ENCODE measurements at regions of chr20 and their contacts with region 1.

Region 1: DNA sequence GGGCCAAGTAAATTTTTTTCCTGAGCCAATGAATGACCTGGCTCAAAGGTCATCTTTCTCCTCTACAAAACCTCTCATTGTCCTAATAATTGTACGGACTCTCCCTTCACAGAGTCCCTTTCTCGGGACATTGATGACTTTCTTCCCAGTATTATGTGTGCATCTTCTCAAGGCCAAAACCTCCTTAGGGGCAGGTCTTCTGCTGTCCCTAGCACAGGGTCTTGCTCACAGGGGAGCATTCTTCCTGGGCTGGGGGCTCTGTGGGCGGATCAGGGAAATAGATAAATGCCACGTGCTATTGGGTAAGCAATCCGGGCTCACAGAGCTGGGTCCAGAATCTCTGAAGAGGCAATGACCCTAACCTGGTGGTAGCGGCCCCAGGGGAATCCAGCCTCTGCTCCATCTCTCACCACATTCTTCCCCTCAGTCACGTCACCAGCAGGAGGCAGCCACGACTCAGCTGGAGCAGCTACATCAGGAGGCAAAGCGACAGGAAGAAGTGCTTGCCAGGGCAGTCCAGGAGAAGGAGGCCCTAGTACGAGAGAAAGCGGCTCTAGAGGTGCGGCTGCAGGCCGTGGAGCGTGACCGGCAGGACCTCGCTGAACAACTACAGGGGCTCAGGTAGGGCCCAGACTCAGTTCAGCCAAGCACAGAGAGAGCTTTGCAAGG is 23.5 kb downstream of the CEP250 start:
- DNase-seq: no peak

Region 2: GRCh38 chr20:35699127-35699975 is 220.4 kb after region 1 on chr20 and contains the starts of genes NFS1 and ROMO1:
- intact Hi-C with region 1: loop called in 1 of 2 experiments (anchors 10 kb)
- DNase-seq: peak; percentile 96
- total RNA-seq, gene NFS1: 15.9 to 22.0 TPM
- total RNA-seq, gene ROMO1: 126 TPM